GM23248 (cell line): ENCODE measurements at regions of chr12 and their contacts with region 1.

Region 1: DNA sequence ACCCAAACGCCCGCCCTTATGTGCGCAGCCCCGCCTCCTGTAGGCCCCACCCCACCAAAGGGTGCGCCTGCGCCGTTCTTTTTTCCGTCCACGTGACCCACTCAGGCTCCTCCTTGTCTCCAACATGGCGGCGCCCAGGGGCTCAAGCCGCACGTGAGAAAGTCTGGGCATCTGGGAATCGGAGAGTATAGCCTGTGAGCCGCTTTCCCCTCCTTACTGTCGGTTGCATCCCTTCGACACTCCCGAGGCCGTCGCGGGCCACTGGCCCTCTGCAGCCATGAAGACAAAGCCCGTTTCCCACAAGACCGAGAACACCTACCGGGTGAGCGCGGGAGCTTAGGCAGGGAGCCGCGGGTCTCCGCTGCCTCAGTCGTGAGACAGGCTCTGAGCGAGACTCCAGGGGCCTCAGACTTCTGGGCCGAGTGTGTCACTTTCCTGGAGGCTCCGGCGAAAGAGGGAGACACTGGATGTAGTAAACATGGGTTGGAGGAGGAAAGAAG is at the start of gene UTP20:
- DNase-seq: peak; percentile 97
- H3K4me3 ChIP-seq: peak within 1 kb of the TSS; percentile 100
- H3K27ac ChIP-seq: peak within 1 kb of the TSS; percentile 45
- H3K4me1 ChIP-seq: peaks cover 8% of the 10 kb centered on the region
- H3K27me3 ChIP-seq: no peaks in the 10 kb centered on the region
- total RNA-seq, gene UTP20: 13.4 and 15.4 TPM in 2 replicates

Region 2: DNA sequence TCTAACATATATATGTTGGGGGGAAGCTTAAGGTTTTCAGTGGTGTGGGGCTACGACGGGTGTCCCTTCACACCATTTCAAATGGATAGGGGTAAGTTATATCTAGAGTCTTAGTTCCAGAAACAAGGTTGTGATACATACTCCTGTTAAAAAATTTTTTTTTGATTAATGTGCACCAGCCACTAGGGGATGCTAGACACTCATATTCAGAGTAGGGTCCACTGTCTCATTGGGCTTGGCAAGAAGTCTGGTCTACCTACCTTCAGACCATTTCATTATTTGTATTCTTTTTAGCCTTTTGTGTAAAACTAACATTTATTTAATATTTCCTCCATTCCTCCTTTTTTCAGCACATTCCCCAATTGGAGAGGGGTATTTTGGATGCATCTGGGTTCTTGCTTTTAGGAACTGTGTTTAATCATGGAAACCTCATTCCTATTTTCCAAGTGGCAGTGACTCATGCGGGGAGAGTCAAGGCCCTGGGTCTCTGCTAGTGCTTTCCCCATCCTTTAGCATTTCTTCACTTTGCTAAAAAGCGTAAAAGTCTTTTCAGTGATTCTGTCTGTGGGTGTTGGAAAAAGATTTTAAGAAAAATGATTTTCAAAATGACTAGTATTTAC is 452.0 kb before region 1 on chr12:
- in situ Hi-C with region 1: loop called (anchors 25 kb)
- DNase-seq: peak; percentile 72
- H3K4me3 ChIP-seq: no peak overlapping the region
- H3K27ac ChIP-seq: no peak overlapping the region
- H3K4me1 ChIP-seq: peaks cover 20% of the 10 kb centered on the region
- H3K27me3 ChIP-seq: no peaks in the 10 kb centered on the region

Region 3: DNA sequence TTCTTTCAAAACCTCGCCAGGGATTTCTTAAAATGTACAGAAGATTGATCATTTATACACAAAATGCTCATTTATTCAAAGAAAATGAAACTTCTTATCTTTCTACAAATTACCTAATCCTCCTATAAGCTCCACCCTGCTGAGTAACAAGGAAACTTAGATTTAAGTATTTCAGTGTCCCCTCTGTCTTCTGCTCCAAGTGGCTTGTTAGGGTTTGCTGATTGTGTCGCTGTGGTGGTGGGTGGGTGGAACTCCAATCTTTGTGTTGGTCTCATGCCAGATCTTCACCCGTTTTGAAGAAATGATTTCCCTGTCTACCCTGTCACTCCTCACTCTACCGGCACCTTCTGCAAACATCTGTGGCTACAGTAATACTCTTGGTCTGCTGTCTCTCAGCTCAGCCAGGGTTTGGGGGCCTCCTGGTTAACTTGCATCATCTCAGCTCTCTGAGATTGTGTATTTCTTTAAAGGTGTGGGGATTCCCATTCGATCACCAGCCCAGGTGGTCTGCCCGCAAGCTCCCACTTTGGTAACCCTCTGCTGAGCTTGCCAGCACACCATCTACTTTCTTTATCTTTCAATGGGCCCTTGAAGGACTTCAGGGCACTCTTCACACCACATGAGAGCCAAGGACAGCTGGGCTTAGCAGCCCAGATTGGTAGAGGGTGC is 671.1 kb after region 1 on chr12:
- in situ Hi-C with region 1: no loop called
- DNase-seq: no peak
- H3K4me3 ChIP-seq: no peak overlapping the region
- H3K27ac ChIP-seq: no peak overlapping the region
- H3K4me1 ChIP-seq: peaks cover 7% of the 10 kb centered on the region
- H3K27me3 ChIP-seq: no peaks in the 10 kb centered on the region